HCT116 (cell line): ENCODE measurements at regions of chr19 and their contacts with region 1.

Region 1: GRCh38 chr19:15759962-15760565 is 22.3 kb downstream of the OR10H3 start:
- DNase-seq: peak; percentile 12
- ATAC-seq: peak; percentile 78
- H3K4me3 ChIP-seq: no peak overlapping the region
- H3K27ac ChIP-seq: no peak overlapping the region
- H3K4me1 ChIP-seq: no peaks in the 10 kb centered on the region
- H3K27me3 ChIP-seq: peaks cover 20% of the 10 kb centered on the region
- CTCF ChIP-seq: peak; percentile 52 to 71 (median 69); a peak in 5 of 6 replicates
- POLR2A ChIP-seq: no peak
- RAD21 ChIP-seq: peak; percentile 70

Region 2: DNA sequence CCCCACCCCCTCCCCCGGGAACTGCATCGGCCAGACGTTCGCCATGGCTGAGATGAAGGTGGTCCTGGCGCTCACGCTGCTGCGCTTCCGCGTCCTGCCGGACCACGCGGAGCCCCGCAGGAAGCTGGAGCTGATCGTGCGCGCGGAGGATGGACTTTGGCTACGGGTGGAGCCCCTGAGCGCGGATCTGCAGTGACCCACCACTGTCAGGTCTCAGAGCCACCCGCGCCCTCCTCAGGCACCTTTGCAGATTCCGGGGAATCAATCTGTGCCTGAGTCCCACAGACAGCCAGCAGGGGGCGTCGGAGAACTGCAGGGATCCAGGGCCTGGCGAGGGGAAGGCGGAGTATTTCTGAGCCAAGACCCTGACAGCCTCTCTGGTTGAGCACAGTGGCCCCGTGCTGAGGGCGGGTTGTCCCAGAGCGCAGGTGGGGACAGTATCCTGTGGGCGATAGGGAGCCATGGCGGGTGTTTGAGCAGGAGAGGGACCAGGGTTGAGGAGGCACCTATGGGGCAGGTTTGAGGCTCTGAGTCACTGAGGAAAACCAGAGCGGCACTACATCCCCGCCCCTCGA is 175.4 kb before region 1 on chr19:
- CTCF ChIA-PET with region 1: no interaction called
- POLR2A ChIA-PET with region 1: no interaction called
- RAD21 ChIA-PET with region 1: no interaction called
- intact Hi-C with region 1: loop called (anchors 5 kb)
- DNase-seq: peak; percentile 67
- ATAC-seq: peak; percentile 98
- H3K4me3 ChIP-seq: no peak overlapping the region
- H3K27ac ChIP-seq: no peak overlapping the region
- H3K4me1 ChIP-seq: peaks cover 0 to 9% of the 10 kb centered on the region in 2 experiments; a peak in 1 of 4 replicates
- H3K27me3 ChIP-seq: peaks cover 13% of the 10 kb centered on the region; the same call in 1 of the 2 replicates
- CTCF ChIP-seq: peak; percentile 97
- POLR2A ChIP-seq: no peak
- RAD21 ChIP-seq: peak; percentile 93

Region 3: DNA sequence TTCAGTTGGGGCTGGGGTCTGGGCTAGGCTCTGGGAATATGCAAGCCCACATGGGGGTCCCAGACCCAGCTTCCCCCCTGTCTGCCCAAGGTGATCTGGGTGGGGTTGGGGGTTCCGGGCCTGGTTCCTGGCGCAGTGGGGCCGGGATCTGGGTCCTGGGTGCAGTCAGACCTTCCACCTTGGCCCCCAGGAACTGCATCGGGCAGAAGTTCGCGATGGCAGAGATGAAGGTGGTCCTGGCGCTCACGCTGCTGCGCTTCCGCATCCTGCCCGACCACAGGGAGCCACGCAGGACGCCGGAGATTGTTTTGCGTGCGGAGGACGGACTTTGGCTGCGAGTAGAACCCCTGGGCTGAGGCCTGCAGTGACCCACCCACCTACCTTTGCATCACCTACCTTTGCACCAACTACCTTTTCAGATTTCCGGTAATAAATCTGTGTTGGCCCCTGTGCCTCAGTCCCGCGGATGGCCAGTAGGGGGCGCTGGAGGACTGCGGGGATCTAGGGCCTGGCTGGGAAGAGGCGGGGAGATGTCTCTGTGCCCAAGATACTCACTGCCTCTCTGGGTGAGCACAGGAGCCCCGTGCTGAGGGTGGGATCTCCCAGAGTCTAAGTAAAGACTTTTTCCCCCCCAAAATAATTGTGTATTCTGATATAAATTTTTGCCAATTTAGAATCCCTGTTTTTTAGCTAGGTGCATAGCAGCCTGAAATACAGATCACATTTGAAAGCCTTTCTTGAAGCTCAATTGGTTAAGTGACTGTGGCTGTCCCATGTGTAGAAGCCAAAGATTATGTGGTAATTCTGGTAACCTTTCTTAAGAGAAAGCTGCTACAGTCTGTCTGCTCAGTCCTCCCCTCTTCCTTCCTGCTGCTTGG is 130.8 kb before region 1 on chr19:
- CTCF ChIA-PET with region 1: no interaction called
- POLR2A ChIA-PET with region 1: no interaction called
- RAD21 ChIA-PET with region 1: no interaction called
- intact Hi-C with region 1: loop called (anchors 1 kb)
- DNase-seq: peak; percentile 51
- ATAC-seq: peak; percentile 96
- H3K4me3 ChIP-seq: no peak overlapping the region
- H3K27ac ChIP-seq: no peak overlapping the region
- H3K4me1 ChIP-seq: peaks cover 0 to 4% of the 10 kb centered on the region in 2 experiments; a peak in 1 of 4 replicates
- H3K27me3 ChIP-seq: 0 out of 2 replicates have a peak, but pooled peaks cover 6% of the 10 kb centered on the region
- CTCF ChIP-seq: peak; percentile 90 to 99 (median 97)
- POLR2A ChIP-seq: no peak
- RAD21 ChIP-seq: peak; percentile 96

Region 4: DNA sequence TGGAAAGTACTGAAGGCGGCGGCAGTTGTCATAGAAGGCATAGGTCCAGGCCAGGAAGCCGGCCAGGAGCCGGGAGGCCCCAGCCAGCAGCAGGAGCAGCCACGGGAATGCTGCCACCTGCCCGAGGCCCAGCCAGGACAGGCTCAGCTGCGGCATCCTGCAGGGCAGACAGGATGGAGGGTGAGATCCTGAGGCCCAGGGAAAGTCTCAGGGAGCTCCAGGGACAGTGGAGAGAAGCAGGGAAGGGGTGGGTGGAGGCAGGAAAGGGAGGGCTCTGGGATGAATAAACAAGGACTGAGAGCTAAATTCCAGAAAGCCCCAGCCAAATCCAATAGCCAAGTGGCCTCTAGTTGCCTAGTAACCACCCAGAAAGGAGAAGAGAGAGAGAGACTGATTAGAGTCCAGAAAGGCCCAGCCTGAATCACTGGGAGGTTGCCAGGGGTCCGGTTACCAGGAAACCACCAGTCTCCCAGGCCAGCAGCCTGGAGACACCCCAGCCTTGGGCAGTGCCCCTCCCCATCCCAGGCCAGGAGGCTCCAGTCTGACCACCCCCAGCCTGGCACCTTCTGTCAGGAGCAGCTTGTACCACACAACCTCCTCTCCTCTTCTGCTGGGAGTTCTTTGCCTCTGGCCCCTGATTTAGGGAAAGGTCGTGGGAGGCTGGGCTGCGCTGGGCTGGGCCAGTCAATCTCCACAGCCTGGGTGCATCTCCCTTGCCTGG is 19.9 kb after region 1 on chr19:
- CTCF ChIA-PET with region 1: no interaction called
- POLR2A ChIA-PET with region 1: no interaction called
- RAD21 ChIA-PET with region 1: no interaction called
- intact Hi-C with region 1: no loop called
- DNase-seq: no peak
- ATAC-seq: peak; percentile 26
- H3K4me3 ChIP-seq: no peak overlapping the region
- H3K27ac ChIP-seq: no peak overlapping the region
- H3K4me1 ChIP-seq: peaks cover 9 to 14% of the 10 kb centered on the region in 2 experiments; a peak in 3 of 4 replicates
- H3K27me3 ChIP-seq: peaks cover 23% of the 10 kb centered on the region; the same call in 1 of the 2 replicates
- CTCF ChIP-seq: no peak
- POLR2A ChIP-seq: no peak
- RAD21 ChIP-seq: no peak

Region 5: DNA sequence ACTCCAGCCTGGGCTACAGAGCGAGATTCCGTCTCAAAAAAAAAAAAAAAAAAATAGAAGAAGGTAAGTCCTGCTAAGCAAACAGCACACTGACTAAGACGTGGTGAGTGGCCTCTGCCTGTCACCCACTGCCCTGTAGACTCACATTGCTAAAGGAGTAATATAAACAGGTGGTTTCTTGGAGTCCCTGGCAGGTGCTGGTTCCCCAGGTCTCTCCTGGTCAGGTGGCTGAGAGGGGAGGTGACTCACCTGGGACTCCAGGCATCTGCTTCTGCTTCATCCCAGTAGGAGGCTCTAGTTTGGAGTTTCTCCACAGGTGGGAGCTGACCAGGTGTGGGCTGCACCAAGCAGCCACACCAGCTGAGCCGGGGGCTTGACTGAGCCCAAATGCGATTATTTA is 55.2 kb after region 1 on chr19 and contains the start of gene OR10H1:
- CTCF ChIA-PET with region 1: no interaction called
- POLR2A ChIA-PET with region 1: no interaction called
- RAD21 ChIA-PET with region 1: no interaction called
- intact Hi-C with region 1: no loop called
- DNase-seq: no peak
- ATAC-seq: peak; percentile 81
- H3K4me3 ChIP-seq: no peak within 1 kb of the TSS
- H3K27ac ChIP-seq: no peak within 1 kb of the TSS
- H3K4me1 ChIP-seq: peaks cover 30 to 55% of the 10 kb centered on the region in 2 experiments
- H3K27me3 ChIP-seq: no peaks in the 10 kb centered on the region
- CTCF ChIP-seq: peak in 2 of 3 experiments; percentile 18 to 28; a peak in 3 of 6 replicates
- POLR2A ChIP-seq: no peak
- RAD21 ChIP-seq: peak; percentile 38; the same call in 1 of the 2 replicates
- total RNA-seq, gene OR10H1: 0.17 TPM